SK-N-SH (cell line): ENCODE measurements at regions of chr2 and their contacts with region 1.

Region 1: DNA sequence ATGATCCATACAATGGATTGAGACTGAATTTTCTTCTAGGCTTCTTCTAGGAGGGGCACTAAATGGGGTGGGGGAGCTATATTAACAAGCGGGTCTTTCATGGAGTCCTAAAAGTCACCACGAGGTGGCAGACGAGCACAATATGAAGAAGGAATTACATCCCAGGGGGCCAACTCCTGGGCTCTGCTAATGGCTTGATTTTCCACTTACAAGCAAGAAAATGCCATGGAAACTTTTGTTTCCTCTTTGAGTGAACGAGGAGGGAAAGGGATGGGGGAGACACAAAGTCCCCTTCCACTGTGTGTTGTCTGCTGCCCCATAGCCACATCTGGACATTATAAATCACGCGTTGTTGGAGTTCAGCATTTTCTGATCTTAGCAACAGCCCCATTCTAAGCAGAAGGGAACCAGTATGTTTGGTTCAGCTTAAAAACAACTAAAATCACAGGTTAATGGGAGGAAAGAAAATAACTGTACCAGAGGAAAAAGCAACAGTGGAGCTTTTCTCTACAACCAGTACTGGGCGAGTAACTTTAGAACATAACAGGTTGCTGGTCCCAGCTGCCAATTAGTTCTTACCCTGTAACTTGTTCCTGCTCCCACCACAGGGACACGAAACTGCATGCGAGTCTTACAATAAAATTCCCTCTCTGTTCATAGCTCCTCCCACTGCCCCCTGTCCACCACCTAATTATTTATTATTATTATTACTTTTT is 285.0 kb upstream of the PARD3B start:
- DNase-seq: peak; percentile 69
- H3K4me3 ChIP-seq: no peak overlapping the region; a peak in 1 of 4 replicates
- H3K27ac ChIP-seq: no peak overlapping the region; a peak in 1 of 4 replicates
- H3K4me1 ChIP-seq: peaks cover 0 to 18% of the 10 kb centered on the region in 2 experiments; a peak in 2 of 4 replicates
- H3K27me3 ChIP-seq: no peaks in the 10 kb centered on the region
- CTCF ChIP-seq: peak; percentile 86
- EP300 ChIP-seq: no peak
- RAD21 ChIP-seq: peak; percentile 75

Region 2: DNA sequence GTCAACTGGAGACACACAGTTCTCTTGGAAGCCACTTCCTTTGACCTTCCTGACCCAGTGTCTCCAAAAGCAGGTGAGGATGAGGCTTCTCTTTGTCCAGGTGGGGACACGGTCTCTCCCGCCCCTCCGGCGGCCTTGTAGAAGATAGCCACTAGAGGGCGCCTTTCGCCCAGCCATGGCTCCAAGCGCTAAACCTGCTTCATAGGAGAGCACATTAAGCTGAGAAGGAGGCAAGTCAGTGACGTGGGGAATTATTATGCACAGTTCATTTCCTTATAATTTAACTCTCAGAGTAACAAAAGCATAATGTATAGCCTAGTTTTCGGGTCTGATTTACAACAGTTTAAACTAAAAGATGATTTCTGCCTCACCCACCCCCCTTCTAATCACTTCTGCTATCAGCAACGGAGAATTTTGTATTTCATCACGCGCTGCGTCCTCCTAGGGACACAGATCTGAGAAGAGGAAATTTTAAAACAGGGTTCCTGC is 115.0 kb before region 1 on chr2:
- CTCF ChIA-PET with region 1: interaction called, 36 read pairs
- POLR2A ChIA-PET with region 1: interaction called, 3 read pairs
- DNase-seq: peak; percentile 72
- H3K4me3 ChIP-seq: peak overlapping the region in 1 of 2 experiments; percentile 45; a peak in 1 of 4 replicates
- H3K27ac ChIP-seq: no peak overlapping the region
- H3K4me1 ChIP-seq: peaks cover 0 to 2% of the 10 kb centered on the region in 2 experiments; a peak in 1 of 4 replicates
- H3K27me3 ChIP-seq: no peaks in the 10 kb centered on the region; the same call in 1 of the 2 replicates
- CTCF ChIP-seq: peak; percentile 97
- EP300 ChIP-seq: no peak
- RAD21 ChIP-seq: peak; percentile 95

Region 3: DNA sequence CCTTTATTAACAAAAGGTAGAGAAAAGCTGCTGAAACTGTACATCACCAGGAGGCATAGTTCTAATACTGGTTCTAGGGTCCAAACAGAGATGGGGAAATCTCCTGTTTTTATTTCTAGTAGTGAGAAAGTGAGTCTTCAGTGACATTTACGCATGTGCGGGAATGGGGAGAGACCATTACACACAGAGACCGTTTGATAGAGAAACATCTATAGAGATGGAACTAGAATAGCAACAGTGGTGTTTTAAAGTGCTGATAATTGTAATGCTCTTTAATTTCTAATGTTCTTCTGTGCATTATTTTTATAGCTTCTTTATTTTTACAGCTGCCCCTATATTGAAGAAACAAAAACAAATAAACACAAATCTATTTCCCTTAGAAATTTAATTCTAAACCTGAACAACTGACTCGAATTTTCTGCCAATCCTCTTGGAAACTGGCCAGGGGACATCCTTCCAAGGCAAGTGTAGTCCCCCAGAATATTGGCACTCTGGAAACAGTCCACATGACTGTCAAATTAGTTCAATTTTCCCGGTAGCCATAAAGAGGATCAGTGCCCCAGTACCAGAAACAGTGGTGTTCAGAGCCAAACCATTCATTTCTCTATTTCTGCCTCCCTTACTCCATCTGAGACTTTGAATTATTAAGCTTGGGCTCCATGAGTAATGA is 62.8 kb before region 1 on chr2:
- CTCF ChIA-PET with region 1: interaction called, 18 read pairs
- POLR2A ChIA-PET with region 1: no interaction called
- DNase-seq: no peak
- H3K4me3 ChIP-seq: no peak overlapping the region
- H3K27ac ChIP-seq: peak overlapping the region in 1 of 2 experiments; percentile 69; a peak in 2 of 4 replicates
- H3K4me1 ChIP-seq: peaks cover 0 to 22% of the 10 kb centered on the region in 2 experiments; a peak in 2 of 4 replicates
- H3K27me3 ChIP-seq: no peaks in the 10 kb centered on the region
- CTCF ChIP-seq: no peak
- EP300 ChIP-seq: no peak
- RAD21 ChIP-seq: no peak

Region 4: GRCh38 chr2:204325468-204325867 is 65.1 kb after region 1 on chr2:
- CTCF ChIA-PET with region 1: interaction called, 13 read pairs
- POLR2A ChIA-PET with region 1: no interaction called
- DNase-seq: peak; percentile 72
- H3K4me3 ChIP-seq: 0 out of 4 replicates have a peak overlapping the region, but pooled peaks of 1 of the 2 experiments have one; percentile 23
- H3K27ac ChIP-seq: no peak overlapping the region
- H3K4me1 ChIP-seq: peaks cover 2 to 5% of the 10 kb centered on the region in 2 experiments; a peak in 2 of 4 replicates
- H3K27me3 ChIP-seq: no peaks in the 10 kb centered on the region
- CTCF ChIP-seq: peak; percentile 92
- EP300 ChIP-seq: no peak
- RAD21 ChIP-seq: peak; percentile 98

Region 5: DNA sequence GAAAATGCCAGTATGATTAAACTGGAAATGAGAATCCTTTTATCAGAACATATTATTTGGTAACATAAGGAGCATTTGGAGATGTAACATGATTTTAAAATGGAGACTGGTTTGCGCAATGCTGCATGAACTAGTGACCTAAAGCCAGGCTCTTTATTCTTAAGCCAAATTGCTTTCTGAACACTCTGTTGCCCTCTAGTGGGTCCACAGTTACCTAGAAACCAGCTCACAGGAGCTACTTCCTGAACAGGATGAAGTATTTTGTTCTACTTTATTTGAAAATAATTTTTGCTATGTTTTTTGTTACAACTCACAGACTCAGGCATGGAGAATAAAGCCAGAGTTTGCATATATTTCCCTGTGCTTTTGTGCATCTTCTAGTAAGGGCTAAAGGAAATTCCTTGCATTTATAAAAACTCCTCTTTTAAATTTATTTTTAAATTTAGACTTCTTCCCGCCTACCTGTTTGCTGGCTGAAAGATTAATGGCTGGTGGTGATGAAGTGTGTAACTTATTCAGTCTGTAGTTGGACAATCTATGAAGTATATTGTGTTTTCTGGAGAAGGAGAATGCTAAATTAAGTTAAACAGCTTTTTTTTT is 431.7 kb after region 1 on chr2:
- CTCF ChIA-PET with region 1: interaction called, 32 read pairs
- POLR2A ChIA-PET with region 1: no interaction called
- DNase-seq: peak; percentile 34
- H3K4me3 ChIP-seq: no peak overlapping the region; a peak in 1 of 4 replicates
- H3K27ac ChIP-seq: no peak overlapping the region
- H3K4me1 ChIP-seq: no peaks in the 10 kb centered on the region; a peak in 1 of 4 replicates
- H3K27me3 ChIP-seq: no peaks in the 10 kb centered on the region
- CTCF ChIP-seq: peak; percentile 82
- EP300 ChIP-seq: no peak
- RAD21 ChIP-seq: peak; percentile 93